CD4-positive, alpha-beta memory T cell (primary cell): ENCODE measurements at regions of chr2 and their contacts with region 1.

Region 1: GRCh38 chr2:134207564-134208209 is 46.2 kb upstream of the MGAT5 start:
- DNase-seq: peak; percentile 58 to 68 (median 64)
- H3K4me3 ChIP-seq: no peak overlapping the region
- H3K4me3 Mint-ChIP-seq: peak overlapping the region in 2 of 8 donors; percentile 4 to 50
- H3K27ac ChIP-seq: no peak overlapping the region
- H3K27ac Mint-ChIP-seq: peak overlapping the region in 5 of 7 donors; percentile 25 to 80 (median 63)
- H3K4me1 ChIP-seq: peaks cover 53% of the 10 kb centered on the region
- H3K4me1 Mint-ChIP-seq: peaks cover 10 to 21% (median 18%) of the 10 kb centered on the region in 4 donors
- H3K27me3 ChIP-seq: no peaks in the 10 kb centered on the region
- H3K27me3 Mint-ChIP-seq: no peaks in the 10 kb centered on the region

Region 2: DNA sequence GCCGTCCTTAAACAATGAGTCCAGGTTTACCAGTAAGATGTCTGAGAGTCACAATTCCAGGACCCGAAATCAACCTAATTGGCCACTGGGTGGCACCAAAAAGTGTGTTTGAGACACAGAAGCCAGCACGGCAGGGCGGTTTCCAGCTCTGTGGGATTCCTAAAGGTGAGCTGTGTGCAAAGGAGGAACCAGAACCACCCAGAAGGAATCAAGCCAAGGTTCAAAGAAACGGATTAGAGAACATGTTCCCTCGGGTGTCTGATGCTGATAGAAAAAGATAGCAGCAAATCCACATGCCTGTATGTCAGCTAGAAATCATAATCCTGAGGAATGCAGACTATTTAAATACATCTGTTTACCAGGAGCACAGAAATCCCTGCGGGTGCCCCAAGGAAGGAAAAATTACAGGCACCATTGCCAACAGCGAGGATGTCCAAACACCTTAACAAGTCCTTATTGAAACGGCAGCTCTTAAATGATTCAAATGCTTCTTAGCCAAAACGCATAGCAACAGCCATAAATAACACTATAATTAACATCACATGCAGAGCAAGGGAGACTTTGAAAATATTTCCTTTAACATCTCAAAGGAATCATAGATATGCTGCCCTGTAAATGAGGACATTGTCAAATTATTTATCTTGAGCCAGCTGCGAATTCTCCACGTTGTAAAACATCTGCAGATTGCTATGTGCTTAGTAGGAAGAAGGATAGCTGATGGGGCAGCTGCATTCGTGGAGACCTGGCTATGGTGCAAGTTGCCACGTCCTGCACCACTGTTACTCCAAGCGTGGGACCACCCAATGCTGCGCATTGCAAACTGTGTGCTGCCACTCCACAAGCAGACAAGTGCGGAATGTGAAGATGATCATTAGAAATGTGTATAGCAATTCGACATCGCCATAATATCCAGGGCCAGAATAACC is 320.7 kb before region 1 on chr2:
- CTCF ChIA-PET with region 1: interaction called, 25 read pairs
- POLR2A ChIA-PET with region 1: no interaction called
- intact Hi-C with region 1: loop called (anchors 5 kb)
- DNase-seq: peak; percentile 43 to 50 (median 50)
- H3K4me3 ChIP-seq: no peak overlapping the region
- H3K4me3 Mint-ChIP-seq: no peak overlapping the region
- H3K27ac ChIP-seq: no peak overlapping the region
- H3K27ac Mint-ChIP-seq: no peak overlapping the region
- H3K4me1 ChIP-seq: no peaks in the 10 kb centered on the region
- H3K4me1 Mint-ChIP-seq: peaks cover 0 to 2% (median under 1%) of the 10 kb centered on the region in 4 donors
- H3K27me3 ChIP-seq: no peaks in the 10 kb centered on the region
- H3K27me3 Mint-ChIP-seq: peaks cover 0 to 7% of the 10 kb centered on the region in 2 donors

Region 3: DNA sequence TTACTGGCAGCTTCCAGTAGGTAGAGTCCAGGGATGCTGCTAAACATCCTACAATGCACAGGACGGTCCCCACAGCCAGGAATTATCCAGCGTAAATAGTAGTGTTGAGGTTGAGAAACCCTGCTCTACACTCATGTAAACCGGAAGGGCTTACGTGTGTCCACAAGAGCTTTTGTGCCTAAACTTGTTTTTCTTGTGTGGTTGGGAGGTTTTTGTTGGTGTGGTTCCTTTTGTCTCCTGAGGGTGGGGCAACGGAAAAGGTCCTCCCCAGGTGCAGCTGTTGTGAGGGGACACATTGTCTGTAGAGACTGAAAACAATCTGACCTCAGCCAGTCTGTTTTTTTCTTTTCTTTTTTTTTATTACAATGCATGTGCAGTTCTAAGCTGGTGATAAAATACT is 26.5 kb before region 1 on chr2:
- CTCF ChIA-PET with region 1: interaction called, 25 read pairs
- POLR2A ChIA-PET with region 1: interaction called, 13 read pairs
- intact Hi-C with region 1: no loop called
- DNase-seq: peak; percentile 78 to 87 (median 80)
- H3K4me3 ChIP-seq: peak overlapping the region in 1 of 2 donors; percentile 20
- H3K4me3 Mint-ChIP-seq: peak overlapping the region; percentile 46 to 81 (median 68)
- H3K27ac ChIP-seq: peak overlapping the region; percentile 25
- H3K27ac Mint-ChIP-seq: peak overlapping the region; percentile 89 to 97 (median 93)
- H3K4me1 ChIP-seq: peaks cover 97% of the 10 kb centered on the region
- H3K4me1 Mint-ChIP-seq: peaks cover 83 to 98% (median 90%) of the 10 kb centered on the region in 4 donors
- H3K27me3 ChIP-seq: no peaks in the 10 kb centered on the region
- H3K27me3 Mint-ChIP-seq: no peaks in the 10 kb centered on the region

Region 4: DNA sequence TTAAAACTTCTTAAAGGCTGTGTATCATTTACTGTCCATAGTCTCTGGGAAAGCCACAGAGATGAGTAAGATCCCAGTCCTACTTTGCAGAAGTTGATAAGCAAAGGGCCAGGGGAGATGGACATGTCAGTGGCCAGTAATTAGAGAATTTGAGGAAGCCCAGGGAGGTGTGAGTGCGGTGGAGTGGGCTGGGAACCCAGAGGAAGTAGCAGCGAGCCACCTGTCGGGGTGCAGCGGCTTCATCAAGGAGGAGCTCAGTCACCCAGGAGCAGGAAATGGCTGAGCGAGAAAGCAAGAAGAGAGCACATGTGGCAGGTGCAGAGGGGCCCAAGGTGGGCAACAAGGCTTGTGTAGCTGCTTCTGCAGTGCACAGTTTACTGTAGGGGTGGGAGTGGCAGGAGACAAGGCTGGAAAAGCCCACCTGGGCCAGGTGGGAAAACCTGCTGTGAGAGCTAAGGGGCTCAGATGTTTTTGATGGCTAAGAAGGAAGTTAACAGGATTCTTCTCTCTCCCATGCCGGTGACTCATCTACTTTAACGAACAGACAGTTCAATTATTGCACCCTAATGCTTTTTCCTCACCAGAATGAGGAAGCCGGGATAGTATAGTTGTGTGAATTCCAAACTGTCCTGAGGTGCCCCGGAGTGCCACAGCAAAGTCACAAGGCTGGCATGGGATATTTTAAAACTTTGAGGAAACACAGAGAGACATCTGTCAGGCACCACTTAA is 11.4 kb after region 1 on chr2:
- CTCF ChIA-PET with region 1: interaction called, 116 read pairs
- POLR2A ChIA-PET with region 1: interaction called, 73 read pairs
- intact Hi-C with region 1: no loop called
- DNase-seq: peak in 4 of 5 donors; percentile 40 to 56 (median 48)
- H3K4me3 ChIP-seq: peak overlapping the region; percentile 12 to 13
- H3K4me3 Mint-ChIP-seq: peak overlapping the region; percentile 80 to 90 (median 84)
- H3K27ac ChIP-seq: peak overlapping the region; percentile 41
- H3K27ac Mint-ChIP-seq: peak overlapping the region; percentile 85 to 97 (median 90)
- H3K4me1 ChIP-seq: peaks cover 60% of the 10 kb centered on the region
- H3K4me1 Mint-ChIP-seq: peaks cover 65 to 78% (median 71%) of the 10 kb centered on the region in 4 donors
- H3K27me3 ChIP-seq: no peaks in the 10 kb centered on the region
- H3K27me3 Mint-ChIP-seq: no peaks in the 10 kb centered on the region

Region 5: DNA sequence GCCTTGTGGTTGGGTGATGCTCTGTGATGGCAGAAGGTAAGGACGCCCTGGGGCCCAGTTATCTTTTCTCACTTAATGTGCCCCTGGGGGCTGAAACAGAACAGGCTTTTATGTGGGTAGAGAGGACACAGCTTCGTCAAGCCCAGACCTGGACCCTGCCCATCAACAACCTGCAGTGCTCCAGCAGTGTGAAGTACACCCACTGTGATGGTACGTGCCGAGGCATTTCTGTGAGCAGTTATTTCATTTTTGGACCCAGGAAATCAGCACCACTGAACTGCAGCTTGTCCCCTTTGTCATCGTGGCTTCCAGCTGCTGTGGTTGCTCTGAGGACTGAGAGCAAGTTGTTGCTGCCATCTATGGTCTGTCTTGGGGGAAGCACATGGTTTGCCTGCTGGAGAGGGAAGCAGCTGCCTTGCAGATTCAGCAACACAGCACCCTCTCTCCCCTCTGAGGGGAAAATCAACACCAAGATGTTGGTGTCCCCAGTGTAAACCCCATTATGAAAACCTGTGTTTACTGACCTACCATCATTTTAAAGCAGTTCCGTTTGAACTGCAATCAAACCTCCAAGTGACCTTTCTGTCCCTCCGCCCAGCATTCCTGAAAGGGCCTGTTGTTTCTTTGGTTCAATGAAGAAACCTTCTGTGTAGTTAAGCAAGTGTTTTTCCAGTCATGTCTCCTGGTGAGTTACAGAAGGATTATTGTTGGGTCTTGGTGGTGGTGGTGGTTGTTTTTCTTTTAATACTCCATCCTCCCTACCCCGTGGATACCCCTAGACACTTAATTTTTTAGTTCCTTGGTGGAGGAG is 204.3 kb after region 1 on chr2:
- CTCF ChIA-PET with region 1: interaction called, 52 read pairs
- POLR2A ChIA-PET with region 1: interaction called, 3 read pairs
- intact Hi-C with region 1: loop called (anchors 5 kb)
- DNase-seq: peak; percentile 68 to 77 (median 73)
- H3K4me3 ChIP-seq: no peak overlapping the region
- H3K4me3 Mint-ChIP-seq: peak overlapping the region in 4 of 8 donors; percentile 6 to 18 (median 14)
- H3K27ac ChIP-seq: no peak overlapping the region
- H3K27ac Mint-ChIP-seq: peak overlapping the region in 6 of 7 donors; percentile 36 to 83 (median 56)
- H3K4me1 ChIP-seq: peaks cover 51% of the 10 kb centered on the region
- H3K4me1 Mint-ChIP-seq: peaks cover 48 to 56% (median 54%) of the 10 kb centered on the region in 4 donors
- H3K27me3 ChIP-seq: no peaks in the 10 kb centered on the region
- H3K27me3 Mint-ChIP-seq: no peaks in the 10 kb centered on the region